ENCODE measurements at regions of chr17 and their contacts with region 1.

Region 1: DNA sequence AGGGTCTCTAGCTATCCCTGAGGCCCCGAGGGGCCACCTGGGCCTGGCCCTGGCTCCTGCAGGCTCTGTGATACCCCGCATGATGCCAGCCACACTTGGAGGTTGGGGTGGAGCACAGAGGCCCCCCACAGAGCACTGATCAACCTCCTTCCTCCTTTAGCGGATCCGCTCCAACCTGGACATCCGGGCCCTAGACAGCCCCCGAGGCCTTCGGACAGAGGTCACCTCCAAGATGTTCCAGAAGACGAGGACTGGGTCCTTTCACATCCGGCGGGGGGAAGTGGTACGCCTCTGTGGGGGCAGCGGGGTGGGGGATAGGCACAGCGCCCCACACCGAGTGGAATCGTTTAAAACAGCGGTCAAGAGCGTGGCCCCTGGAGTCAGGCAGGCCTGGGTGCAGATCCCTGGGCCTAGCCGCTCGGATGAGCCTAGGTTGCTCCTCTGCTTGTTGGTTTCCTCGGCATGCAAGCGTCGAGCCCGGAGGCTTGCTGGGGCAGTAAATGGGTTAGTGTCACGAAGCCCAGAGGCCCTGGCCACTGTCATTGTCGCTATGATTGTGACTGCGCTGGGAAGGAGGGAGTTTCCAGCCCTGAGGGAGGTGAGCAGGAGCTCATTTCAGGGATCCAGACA is 9.9 kb downstream of the ITGB4 start:
- DNase-seq: no peak
- ATAC-seq: no peak; the same call in 2 of the 3 replicates
- H3K4me3 ChIP-seq: no peak overlapping the region
- H3K27ac ChIP-seq: no peak overlapping the region
- H3K4me1 ChIP-seq: peaks cover 0 to 36% of the 10 kb centered on the region in 2 experiments; a peak in 2 of 5 replicates
- H3K27me3 ChIP-seq: peaks cover 9 to 38% of the 10 kb centered on the region in 2 experiments; a peak in 4 of 5 replicates
- CTCF ChIP-seq: no peak
- EP300 ChIP-seq: no peak
- POLR2A ChIP-seq: no peak
- RAD21 ChIP-seq: no peak

Region 2: DNA sequence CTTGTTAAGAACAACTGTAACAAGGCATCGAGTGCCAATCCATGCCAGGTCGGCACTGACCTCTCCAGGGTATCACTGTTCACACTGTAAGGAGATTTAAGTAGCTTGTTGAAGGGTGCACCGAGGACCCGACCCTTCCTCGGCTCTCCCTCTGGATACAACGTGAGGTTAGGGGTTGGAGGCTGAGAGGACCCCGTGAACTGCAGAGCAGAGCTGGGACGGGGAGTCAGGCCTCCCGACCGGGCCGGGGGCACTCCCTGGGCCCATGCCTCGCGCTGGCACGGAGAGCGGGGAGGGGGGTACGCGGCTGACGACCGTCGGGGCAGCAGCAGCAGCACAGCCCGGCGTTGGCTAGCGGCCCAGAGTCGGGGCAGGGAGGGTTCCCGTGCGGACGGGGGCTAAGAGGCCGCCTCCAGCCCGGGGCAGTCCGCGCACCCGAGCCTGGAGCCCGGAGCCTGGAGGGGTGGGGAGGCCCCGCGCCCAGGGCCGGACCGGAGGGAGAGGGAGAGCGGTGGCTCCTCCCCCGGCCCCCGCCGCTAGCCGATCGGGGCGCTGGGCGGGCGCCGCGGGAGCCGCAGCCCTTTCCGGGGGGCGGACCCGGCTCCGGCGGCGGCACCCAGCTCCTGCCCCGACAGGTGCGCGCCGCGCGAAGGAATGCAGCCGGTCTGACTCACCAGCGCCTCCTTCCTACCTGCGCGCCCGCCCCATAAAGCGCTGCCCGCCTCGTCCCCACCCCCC is 10.3 kb before region 1 on chr17 and contains the start of gene ITGB4:
- CTCF ChIA-PET with region 1: interaction called, 3 read pairs
- POLR2A ChIA-PET with region 1: interaction called, 12 read pairs
- in situ Hi-C with region 1: no loop called
- intact Hi-C with region 1: no loop called
- DNase-seq: peak; percentile 40 to 95 (median 80)
- ATAC-seq: peak; percentile 77
- H3K4me3 ChIP-seq: peak within 1 kb of the TSS; percentile 31
- H3K27ac ChIP-seq: no peak within 1 kb of the TSS
- H3K4me1 ChIP-seq: peaks cover 0 to 32% of the 10 kb centered on the region in 2 experiments; a peak in 3 of 5 replicates
- H3K27me3 ChIP-seq: peaks cover 18 to 59% of the 10 kb centered on the region in 2 experiments
- CTCF ChIP-seq: no peak
- EP300 ChIP-seq: no peak
- POLR2A ChIP-seq: no peak
- RAD21 ChIP-seq: no peak
- polyA plus RNA-seq, gene ITGB4: not detected

Region 3: DNA sequence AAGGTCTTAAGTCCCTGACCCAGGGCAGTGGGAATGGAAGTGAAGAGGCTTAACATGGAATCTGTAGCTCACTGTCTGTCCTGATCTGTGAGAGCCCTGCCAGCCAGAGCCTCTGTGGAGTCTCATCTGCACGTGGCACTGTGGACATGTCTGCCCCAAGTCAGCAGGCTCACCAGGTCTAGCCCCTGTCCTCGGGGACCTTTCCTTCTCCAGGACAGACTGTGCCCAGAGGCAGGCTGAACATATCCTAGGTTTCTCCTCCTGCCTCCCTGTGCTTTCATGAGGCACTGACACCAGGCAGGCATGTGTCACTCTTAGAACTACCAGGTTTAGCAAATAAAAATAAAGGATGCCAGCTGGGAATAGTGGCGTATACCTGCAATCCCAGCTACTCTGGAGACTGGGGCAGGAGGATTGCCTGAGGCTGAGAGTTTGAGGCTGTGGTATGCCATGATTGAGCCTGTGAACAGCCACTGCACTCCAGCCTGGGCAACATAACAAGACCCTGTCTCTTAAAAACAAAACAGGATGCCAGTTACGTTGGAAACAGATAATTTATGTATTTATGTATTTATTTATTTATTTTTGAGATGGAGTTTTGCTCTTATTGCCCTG is 75.8 kb after region 1 on chr17:
- CTCF ChIA-PET with region 1: no interaction called
- POLR2A ChIA-PET with region 1: no interaction called
- in situ Hi-C with region 1: no loop called
- intact Hi-C with region 1: no loop called
- DNase-seq: no peak
- ATAC-seq: no peak
- H3K4me3 ChIP-seq: no peak overlapping the region
- H3K27ac ChIP-seq: no peak overlapping the region
- H3K4me1 ChIP-seq: peaks cover 10 to 15% of the 10 kb centered on the region in 2 experiments
- H3K27me3 ChIP-seq: no peaks in the 10 kb centered on the region
- CTCF ChIP-seq: no peak
- EP300 ChIP-seq: no peak
- POLR2A ChIP-seq: no peak
- RAD21 ChIP-seq: no peak

Region 4: DNA sequence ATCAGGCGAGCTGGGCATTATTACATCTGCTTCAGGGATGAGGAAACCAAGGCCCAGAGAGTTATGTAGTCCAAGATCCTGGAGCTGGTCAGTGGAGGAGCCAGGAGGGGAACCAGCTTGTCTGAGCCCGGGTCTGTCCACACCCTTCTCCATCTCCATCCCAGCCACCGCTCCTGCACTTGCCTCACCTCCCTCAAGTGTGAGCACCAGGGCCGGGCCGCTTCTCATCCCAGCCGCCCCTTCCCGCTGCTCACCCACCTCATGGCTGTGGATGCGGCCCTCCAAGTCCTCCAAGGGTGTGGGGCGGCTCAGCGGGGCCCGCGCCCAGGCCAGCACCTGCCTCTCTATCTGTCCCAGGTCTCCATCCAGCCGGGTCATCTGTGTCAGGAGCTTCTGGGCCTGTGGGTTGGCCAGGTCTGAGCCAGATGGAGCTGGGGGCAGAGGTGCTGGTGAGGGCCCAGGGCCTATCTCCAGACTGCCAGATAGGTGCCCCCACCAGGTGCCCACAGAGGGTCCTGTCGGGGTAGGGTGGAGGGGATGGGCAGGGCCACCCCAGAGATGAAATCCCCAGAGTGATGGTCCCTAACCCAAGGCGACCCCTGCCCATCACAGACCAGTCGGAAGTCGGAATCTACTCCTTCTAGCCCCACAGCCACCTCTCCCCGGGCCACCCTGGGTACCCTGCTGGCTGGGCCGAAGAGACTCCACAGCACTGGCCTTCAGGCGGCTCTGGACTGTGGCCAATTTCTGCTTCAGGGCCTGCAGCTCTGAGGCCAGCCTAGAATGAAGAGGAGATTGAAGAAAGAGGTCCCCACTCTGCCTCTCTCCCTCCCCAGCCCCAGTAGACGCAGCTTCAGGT is 286.5 kb after region 1 on chr17:
- CTCF ChIA-PET with region 1: no interaction called
- POLR2A ChIA-PET with region 1: no interaction called
- in situ Hi-C with region 1: no loop called
- intact Hi-C with region 1: no loop called
- DNase-seq: no peak
- ATAC-seq: no peak
- H3K4me3 ChIP-seq: no peak overlapping the region
- H3K27ac ChIP-seq: no peak overlapping the region
- H3K4me1 ChIP-seq: peaks cover 0 to 52% of the 10 kb centered on the region in 2 experiments; a peak in 3 of 5 replicates
- H3K27me3 ChIP-seq: peaks cover 17 to 45% of the 10 kb centered on the region in 2 experiments; a peak in 4 of 5 replicates
- CTCF ChIP-seq: no peak
- EP300 ChIP-seq: no peak
- POLR2A ChIP-seq: no peak
- RAD21 ChIP-seq: no peak

Measured in K562 (cell line).